ENCODE measurements at regions of chr4 and their contacts with region 1.

Region 1: DNA sequence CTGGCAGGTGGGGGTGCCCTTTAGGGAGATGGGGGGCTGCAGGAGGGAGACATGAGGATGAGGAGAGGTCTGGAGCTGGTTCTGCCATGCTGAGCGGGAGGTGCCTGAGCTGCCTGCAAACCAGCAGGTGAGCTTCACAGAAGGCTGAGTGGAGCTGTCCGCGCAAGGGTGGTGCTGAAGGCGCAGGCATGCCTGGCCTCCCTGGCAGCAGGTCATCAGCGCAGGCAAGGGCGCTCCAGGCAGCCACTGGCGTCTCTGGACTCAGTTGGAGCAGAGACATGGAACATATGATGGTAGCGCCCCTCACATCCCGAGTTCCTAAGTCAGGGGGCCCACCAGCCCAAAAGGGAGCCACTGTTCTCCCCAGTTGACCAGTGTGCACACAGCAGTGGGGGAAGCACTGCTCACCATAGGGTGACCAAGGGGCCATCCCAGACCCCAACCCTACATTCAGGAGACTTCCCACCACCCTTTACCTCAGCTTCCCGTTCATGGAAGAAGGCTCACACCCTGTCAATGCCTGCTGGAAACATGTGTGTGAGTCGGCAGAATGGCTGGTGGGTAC is 25.9 kb downstream of the ADRA2C start:
- DNase-seq: peak; percentile 92
- ATAC-seq: peak; percentile 77
- H3K4me3 Mint-ChIP-seq: no peak overlapping the region
- H3K27ac Mint-ChIP-seq: no peak overlapping the region; the same call in 1 of the 2 replicates
- H3K4me1 Mint-ChIP-seq: peaks cover 7% of the 10 kb centered on the region
- H3K27me3 Mint-ChIP-seq: peaks cover 7% of the 10 kb centered on the region
- CTCF ChIP-seq: no peak

Region 2: DNA sequence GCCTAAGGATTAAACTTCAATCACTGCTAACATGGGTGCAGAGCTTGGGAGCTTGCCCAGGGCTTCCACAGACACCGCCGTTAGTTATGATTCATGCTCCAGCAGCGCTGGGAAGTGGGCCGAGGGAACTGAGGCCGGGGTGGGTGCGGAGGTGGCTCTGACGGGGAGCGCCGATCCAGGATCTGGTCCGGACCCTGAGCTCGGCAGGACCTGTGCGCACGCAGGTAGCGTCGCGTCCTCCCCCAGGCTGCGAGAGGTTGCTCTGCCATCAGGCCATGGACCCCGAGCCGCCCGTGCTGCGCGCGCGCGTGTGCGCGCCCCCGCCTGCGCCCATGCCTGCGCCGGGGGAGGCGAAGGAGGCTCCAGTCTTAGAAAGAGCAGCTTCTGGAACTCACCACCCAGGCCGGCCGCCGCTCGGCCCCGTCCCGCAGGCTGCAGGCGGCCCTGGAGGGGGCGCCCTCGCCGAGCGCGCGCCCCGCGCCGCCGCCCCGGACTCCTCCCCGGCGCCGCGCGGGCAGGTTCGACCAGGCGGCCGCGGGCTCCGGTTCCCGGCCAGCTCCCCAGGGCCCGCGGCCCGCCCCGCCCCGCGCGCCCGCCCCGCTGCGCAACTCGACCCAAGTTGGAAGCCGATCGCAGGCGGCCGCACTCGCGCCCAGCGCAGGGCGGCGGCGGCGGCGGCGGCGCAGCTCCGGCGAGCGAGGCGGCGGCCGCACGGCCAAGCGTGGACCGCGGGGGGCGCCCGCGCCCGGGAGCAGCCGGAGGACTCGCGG is 26.6 kb before region 1 on chr4:
- CTCF ChIA-PET with region 1: interaction called, 87 read pairs
- POLR2A ChIA-PET with region 1: no interaction called
- DNase-seq: peak; percentile 70
- ATAC-seq: peak; percentile 71
- H3K4me3 Mint-ChIP-seq: peak overlapping the region; percentile 47
- H3K27ac Mint-ChIP-seq: no peak overlapping the region
- H3K4me1 Mint-ChIP-seq: peaks cover 8% of the 10 kb centered on the region
- H3K27me3 Mint-ChIP-seq: peaks cover 37% of the 10 kb centered on the region
- CTCF ChIP-seq: no peak

Region 3: DNA sequence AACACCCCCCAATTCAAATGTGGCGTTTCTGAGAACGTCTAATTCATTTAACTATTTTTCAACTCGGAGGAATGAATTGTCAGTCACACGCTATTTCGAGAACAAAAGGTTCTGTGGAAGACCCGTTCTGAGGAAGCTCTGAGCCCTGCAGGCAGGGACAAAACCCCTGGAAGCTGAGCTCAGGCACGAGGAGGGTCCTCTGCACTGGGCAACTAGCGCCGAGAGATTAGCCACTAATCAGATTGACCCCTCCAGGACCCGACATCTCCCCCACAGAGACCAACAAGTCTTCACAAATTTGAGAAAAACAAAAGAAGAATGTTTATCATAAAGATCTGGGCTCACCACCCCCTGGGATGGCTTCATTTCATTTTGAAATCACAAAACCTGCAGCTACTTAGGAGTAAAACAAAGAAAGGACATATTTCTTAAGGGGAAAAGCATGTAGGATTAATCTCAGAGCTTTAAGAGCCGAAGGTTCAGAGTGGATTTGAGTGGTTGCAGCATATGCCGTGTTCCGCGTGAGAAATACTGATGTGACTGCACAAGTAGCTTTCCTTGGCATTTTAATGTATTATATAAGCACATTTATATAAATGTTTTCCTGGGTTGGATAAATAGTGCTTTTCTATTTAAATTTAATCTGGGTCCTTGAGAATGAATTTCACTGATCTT is 15.9 kb after region 1 on chr4:
- CTCF ChIA-PET with region 1: interaction called, 49 read pairs
- POLR2A ChIA-PET with region 1: no interaction called
- DNase-seq: no peak
- ATAC-seq: peak; percentile 59
- H3K4me3 Mint-ChIP-seq: peak overlapping the region; percentile 3; the same call in 1 of the 2 replicates
- H3K27ac Mint-ChIP-seq: peak overlapping the region; percentile 21; the same call in 1 of the 2 replicates
- H3K4me1 Mint-ChIP-seq: peaks cover 22% of the 10 kb centered on the region
- H3K27me3 Mint-ChIP-seq: peaks cover 5% of the 10 kb centered on the region; the same call in 1 of the 2 replicates
- CTCF ChIP-seq: no peak

Region 4: GRCh38 chr4:3836756-3837601 is 44.9 kb after region 1 on chr4:
- CTCF ChIA-PET with region 1: interaction called, 10 read pairs
- POLR2A ChIA-PET with region 1: no interaction called
- DNase-seq: peak; percentile 77
- ATAC-seq: peak; percentile 36
- H3K4me3 Mint-ChIP-seq: no peak overlapping the region
- H3K27ac Mint-ChIP-seq: no peak overlapping the region
- H3K4me1 Mint-ChIP-seq: peaks cover 39% of the 10 kb centered on the region
- H3K27me3 Mint-ChIP-seq: peaks cover 29% of the 10 kb centered on the region
- CTCF ChIP-seq: no peak

Region 5: GRCh38 chr4:3862640-3863420 is 70.8 kb after region 1 on chr4:
- CTCF ChIA-PET with region 1: interaction called, 83 read pairs
- POLR2A ChIA-PET with region 1: no interaction called
- DNase-seq: peak; percentile 90
- ATAC-seq: peak; percentile 90
- H3K4me3 Mint-ChIP-seq: no peak overlapping the region; the same call in 1 of the 2 replicates
- H3K27ac Mint-ChIP-seq: peak overlapping the region; percentile 92
- H3K4me1 Mint-ChIP-seq: peaks cover 22% of the 10 kb centered on the region
- H3K27me3 Mint-ChIP-seq: no peaks in the 10 kb centered on the region
- CTCF ChIP-seq: no peak

Region 6: DNA sequence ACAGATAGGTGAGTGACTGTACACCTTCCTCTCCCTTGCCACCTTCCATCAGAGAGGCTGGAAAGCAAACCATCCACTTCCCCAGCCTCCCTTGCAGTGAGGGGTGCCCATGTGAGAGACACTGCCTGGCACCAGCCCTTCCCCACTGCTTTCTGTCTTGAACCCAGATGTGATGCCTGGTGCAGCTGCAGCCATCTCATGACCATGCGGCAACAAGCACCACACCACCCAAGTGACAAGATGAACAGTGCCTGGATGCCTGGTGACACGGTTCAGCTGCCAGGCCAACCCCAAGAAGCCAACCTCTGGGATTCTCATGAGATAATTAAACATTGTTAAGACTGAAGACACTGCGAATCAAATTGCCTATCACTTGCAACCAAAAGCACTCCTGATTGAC is 403.3 kb after region 1 on chr4:
- CTCF ChIA-PET with region 1: no interaction called
- POLR2A ChIA-PET with region 1: no interaction called
- DNase-seq: no peak
- ATAC-seq: no peak
- H3K4me3 Mint-ChIP-seq: no peak overlapping the region
- H3K27ac Mint-ChIP-seq: no peak overlapping the region
- H3K4me1 Mint-ChIP-seq: no peaks in the 10 kb centered on the region
- H3K27me3 Mint-ChIP-seq: peaks cover 13% of the 10 kb centered on the region
- CTCF ChIP-seq: no peak

Region 7: DNA sequence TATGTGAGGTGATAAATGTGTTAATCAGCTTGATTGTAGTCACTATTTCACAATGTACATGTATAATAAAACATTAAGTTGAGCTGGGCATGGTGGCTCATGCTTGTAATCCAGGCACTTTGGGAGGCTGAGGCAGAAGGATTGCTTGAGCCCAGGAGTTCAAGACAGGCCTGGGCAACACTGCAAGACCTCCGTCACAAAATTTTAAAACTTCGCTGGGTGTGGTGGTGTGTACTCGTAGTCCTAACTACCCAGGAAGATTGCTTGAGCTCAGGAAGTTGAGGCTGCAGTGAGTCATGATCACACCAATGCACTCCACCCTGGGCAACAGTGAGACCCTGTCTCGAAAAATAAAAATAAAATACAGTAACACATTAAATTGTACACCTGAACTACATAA is 477.8 kb after region 1 on chr4:
- CTCF ChIA-PET with region 1: no interaction called
- POLR2A ChIA-PET with region 1: no interaction called
- DNase-seq: no peak
- ATAC-seq: no peak
- H3K4me3 Mint-ChIP-seq: no peak overlapping the region
- H3K27ac Mint-ChIP-seq: peak overlapping the region; percentile 48; the same call in 1 of the 2 replicates
- H3K4me1 Mint-ChIP-seq: no peaks in the 10 kb centered on the region
- H3K27me3 Mint-ChIP-seq: no peaks in the 10 kb centered on the region; the same call in 1 of the 2 replicates
- CTCF ChIP-seq: no peak

Measured in WTC11 (cell line).